ENCODE measurements at regions of chr6 and their contacts with region 1.

Region 1: GRCh38 chr6:112780498-112781096 is 433.5 kb downstream of the RFPL4B start:
- DNase-seq: peak; percentile 78
- ATAC-seq: peak; percentile 86
- H3K4me3 ChIP-seq: no peak overlapping the region
- H3K4me3 Mint-ChIP-seq: no peak overlapping the region
- H3K27ac ChIP-seq: no peak overlapping the region
- H3K27ac Mint-ChIP-seq: no peak overlapping the region
- H3K4me1 ChIP-seq: no peaks in the 10 kb centered on the region
- H3K4me1 Mint-ChIP-seq: no peaks in the 10 kb centered on the region
- H3K27me3 ChIP-seq: no peaks in the 10 kb centered on the region
- H3K27me3 Mint-ChIP-seq: no peaks in the 10 kb centered on the region
- CTCF ChIP-seq: peak; percentile 91

Region 2: DNA sequence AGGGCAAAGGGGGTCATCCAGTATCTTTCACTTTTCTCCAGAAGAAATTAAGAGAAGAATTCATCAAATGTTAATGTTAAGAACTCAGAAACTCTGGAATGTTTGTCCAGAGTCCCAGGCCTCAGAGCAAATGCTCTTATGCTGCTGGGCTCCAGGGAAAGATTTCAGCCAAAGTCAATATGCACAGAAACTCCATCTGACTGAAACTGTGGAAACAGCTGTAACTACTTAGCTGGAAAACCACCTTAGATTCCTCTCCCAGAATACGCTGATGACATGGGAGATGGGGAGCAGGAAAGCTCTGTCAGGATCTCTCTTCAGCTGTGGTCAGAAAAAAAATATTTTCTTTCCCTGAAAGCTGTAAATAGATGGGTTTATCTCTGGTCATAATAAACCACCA is 126.1 kb after region 1 on chr6:
- CTCF ChIA-PET with region 1: no interaction called
- POLR2A ChIA-PET with region 1: no interaction called
- intact Hi-C with region 1: no loop called
- DNase-seq: no peak
- ATAC-seq: no peak
- H3K4me3 ChIP-seq: no peak overlapping the region
- H3K4me3 Mint-ChIP-seq: no peak overlapping the region
- H3K27ac ChIP-seq: no peak overlapping the region
- H3K27ac Mint-ChIP-seq: no peak overlapping the region
- H3K4me1 ChIP-seq: no peaks in the 10 kb centered on the region
- H3K4me1 Mint-ChIP-seq: no peaks in the 10 kb centered on the region
- H3K27me3 ChIP-seq: no peaks in the 10 kb centered on the region
- H3K27me3 Mint-ChIP-seq: peaks cover 7% of the 10 kb centered on the region
- CTCF ChIP-seq: no peak

Region 3: GRCh38 chr6:113879186-113880096 is 1098.8 kb after region 1 on chr6:
- CTCF ChIA-PET with region 1: interaction called, 21 read pairs
- POLR2A ChIA-PET with region 1: no interaction called
- intact Hi-C with region 1: loop called (anchors 1 kb)
- DNase-seq: peak; percentile 74
- ATAC-seq: peak; percentile 100
- H3K4me3 ChIP-seq: no peak overlapping the region
- H3K4me3 Mint-ChIP-seq: no peak overlapping the region
- H3K27ac ChIP-seq: no peak overlapping the region
- H3K27ac Mint-ChIP-seq: no peak overlapping the region
- H3K4me1 ChIP-seq: no peaks in the 10 kb centered on the region
- H3K4me1 Mint-ChIP-seq: peaks cover 3% of the 10 kb centered on the region
- H3K27me3 ChIP-seq: no peaks in the 10 kb centered on the region
- H3K27me3 Mint-ChIP-seq: no peaks in the 10 kb centered on the region
- CTCF ChIP-seq: peak; percentile 91

Region 4: DNA sequence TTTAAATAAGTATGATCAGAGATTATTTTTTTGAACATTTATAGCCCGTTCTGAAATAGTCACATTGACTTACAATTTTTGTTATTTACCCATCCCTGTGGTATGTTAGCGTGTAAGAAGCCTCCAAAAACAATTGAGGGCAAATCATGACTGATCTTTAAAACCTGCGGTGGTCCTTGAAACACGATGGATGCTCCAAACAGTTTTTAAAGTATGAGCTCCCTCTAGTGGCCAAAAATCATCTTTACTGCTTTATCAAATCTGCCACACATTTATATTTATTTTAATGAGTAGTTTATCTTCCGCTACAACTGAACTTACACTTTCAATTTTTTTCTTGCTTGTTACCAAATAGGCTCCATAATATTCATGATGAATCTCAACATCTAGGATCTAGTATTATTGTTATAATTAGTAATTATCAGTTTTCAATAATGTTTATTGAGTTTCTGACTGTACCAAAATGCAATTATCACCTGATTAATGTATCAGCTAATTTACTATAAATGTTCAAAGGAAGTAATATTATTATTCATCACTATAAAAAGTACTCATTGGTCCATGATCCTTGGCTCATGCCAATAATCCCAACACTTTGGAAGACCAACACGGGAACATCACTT is 1128.7 kb after region 1 on chr6:
- CTCF ChIA-PET with region 1: interaction called, 28 read pairs
- POLR2A ChIA-PET with region 1: no interaction called
- intact Hi-C with region 1: loop called (anchors 1 kb)
- DNase-seq: peak; percentile 72
- ATAC-seq: peak; percentile 57
- H3K4me3 ChIP-seq: no peak overlapping the region
- H3K4me3 Mint-ChIP-seq: no peak overlapping the region
- H3K27ac ChIP-seq: no peak overlapping the region
- H3K27ac Mint-ChIP-seq: no peak overlapping the region
- H3K4me1 ChIP-seq: no peaks in the 10 kb centered on the region
- H3K4me1 Mint-ChIP-seq: peaks cover 2% of the 10 kb centered on the region
- H3K27me3 ChIP-seq: no peaks in the 10 kb centered on the region
- H3K27me3 Mint-ChIP-seq: no peaks in the 10 kb centered on the region
- CTCF ChIP-seq: peak; percentile 97

Region 5: DNA sequence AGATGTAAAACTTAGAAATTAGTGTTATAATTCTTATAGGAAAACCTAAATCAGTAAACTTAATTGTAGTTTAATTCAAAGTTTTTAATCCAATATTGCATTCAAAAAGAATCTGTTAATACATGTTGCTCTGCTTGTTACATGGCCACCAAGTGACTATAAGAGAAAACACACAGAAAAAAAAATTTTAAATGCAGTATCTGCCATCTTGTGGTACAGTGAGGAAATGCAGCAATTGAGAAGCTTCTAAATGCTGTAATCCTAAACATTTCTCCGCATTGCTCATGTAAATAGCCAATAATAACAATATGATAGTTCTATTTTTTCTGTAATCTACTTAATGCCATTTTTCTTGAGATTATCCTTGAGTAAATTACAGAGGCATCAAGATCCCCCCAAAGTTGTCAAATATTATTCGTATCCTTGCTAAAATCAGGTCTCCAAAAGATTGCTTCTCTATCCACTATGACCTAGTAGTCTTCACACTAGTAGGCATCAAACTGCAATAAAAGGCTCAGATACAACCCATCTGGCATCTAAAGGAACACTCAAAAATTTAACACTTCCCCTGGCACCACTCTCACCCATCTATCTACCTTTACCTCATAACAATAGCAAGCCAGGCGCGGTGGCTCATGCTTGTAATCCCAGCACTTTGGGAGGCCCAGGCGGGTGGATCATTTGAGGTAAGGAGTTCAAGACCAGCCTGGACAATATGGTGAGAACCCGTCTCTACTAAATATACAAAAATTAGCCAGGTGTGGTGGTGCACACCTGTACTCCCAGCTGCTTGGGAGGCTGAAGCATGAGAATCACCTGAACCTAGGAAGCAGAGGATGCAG is 1155.7 kb after region 1 on chr6:
- CTCF ChIA-PET with region 1: no interaction called
- POLR2A ChIA-PET with region 1: no interaction called
- intact Hi-C with region 1: loop called (anchors 1 kb)
- DNase-seq: peak; percentile 59
- ATAC-seq: peak; percentile 58
- H3K4me3 ChIP-seq: no peak overlapping the region
- H3K4me3 Mint-ChIP-seq: no peak overlapping the region
- H3K27ac ChIP-seq: no peak overlapping the region
- H3K27ac Mint-ChIP-seq: no peak overlapping the region
- H3K4me1 ChIP-seq: no peaks in the 10 kb centered on the region
- H3K4me1 Mint-ChIP-seq: no peaks in the 10 kb centered on the region
- H3K27me3 ChIP-seq: no peaks in the 10 kb centered on the region
- H3K27me3 Mint-ChIP-seq: no peaks in the 10 kb centered on the region
- CTCF ChIP-seq: peak; percentile 87

Measured in B cell (primary cell).